Heart left ventricle (tissue), 16 donors: ENCODE measurements at regions of chr7 and their contacts with region 1.

Region 1: DNA sequence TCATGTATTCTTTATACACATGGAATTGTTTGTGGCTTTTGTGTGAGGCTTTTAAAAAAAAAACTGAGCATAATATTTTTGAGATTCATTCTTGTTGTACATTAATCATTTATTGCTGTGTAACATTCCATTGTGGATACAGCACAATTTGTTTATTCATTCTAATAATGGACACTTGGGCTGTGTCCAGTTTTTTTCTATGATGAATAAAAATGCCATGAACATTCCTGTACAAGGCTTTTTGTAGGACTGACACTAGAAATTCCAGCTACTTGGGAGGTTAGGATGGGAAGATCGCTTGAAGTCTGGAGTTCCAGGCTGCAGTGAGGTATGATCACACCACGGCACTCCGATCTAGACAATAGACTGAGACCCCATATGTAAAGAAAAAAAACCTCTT is 254.3 kb upstream of the CACNA2D1 start:
- DNase-seq: no peak
- ATAC-seq: no peak
- H3K4me3 ChIP-seq: no peak overlapping the region
- H3K27ac ChIP-seq: no peak overlapping the region
- H3K4me1 ChIP-seq: no peaks in the 10 kb centered on the region
- H3K27me3 ChIP-seq: no peaks in the 10 kb centered on the region
- CTCF ChIP-seq: no peak
- POLR2A ChIP-seq: no peak

Region 2: DNA sequence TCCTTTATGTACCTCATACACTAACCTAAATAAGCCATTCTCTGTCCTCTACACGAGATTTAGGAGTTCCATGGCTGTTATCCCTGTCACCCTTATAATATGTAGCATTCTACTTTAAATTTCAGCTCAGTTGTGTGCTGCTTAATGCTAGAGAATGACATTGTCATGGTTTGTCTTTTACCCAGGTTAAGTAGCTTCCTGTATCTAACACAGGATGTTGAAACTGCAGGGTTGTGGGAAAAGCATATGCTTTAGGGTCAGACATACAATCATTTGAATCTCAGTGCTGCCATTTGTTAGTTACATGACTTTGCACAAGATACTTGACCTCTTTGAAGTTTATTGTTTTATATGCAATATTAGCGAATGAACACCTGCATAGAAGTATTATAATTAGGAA is 19.2 kb before region 1 on chr7:
- intact Hi-C with region 1: loop called in 1 of 10 experiments (anchors 2 kb)
- DNase-seq: no peak
- ATAC-seq: no peak
- H3K4me3 ChIP-seq: no peak overlapping the region
- H3K27ac ChIP-seq: no peak overlapping the region
- H3K4me1 ChIP-seq: peaks cover 0 to 2% (median 0%) of the 10 kb centered on the region in 12 donors
- H3K27me3 ChIP-seq: peaks cover 0 to 2% (median 0%) of the 10 kb centered on the region in 9 donors
- CTCF ChIP-seq: no peak
- POLR2A ChIP-seq: no peak